T-cell (primary cell): ENCODE measurements at regions of chr7 and their contacts with region 1.

Region 1: GRCh38 chr7:105249216-105249615 is 139.5 kb downstream of the SRPK2 start:
- DNase-seq: no peak
- ATAC-seq: no peak
- H3K4me3 ChIP-seq: no peak overlapping the region
- H3K4me3 Mint-ChIP-seq: no peak overlapping the region
- H3K27ac ChIP-seq: no peak overlapping the region
- H3K27ac Mint-ChIP-seq: no peak overlapping the region
- H3K4me1 ChIP-seq: no peaks in the 10 kb centered on the region
- H3K4me1 Mint-ChIP-seq: peaks cover 40 to 47% (median 40%) of the 10 kb centered on the region in 3 donors
- H3K27me3 ChIP-seq: no peaks in the 10 kb centered on the region
- H3K27me3 Mint-ChIP-seq: no peaks in the 10 kb centered on the region

Region 2: GRCh38 chr7:105156731-105157130 is 92.5 kb before region 1 on chr7:
- CTCF ChIA-PET with region 1: no interaction called
- POLR2A ChIA-PET with region 1: no interaction called
- DNase-seq: no peak
- ATAC-seq: no peak
- H3K4me3 ChIP-seq: no peak overlapping the region
- H3K4me3 Mint-ChIP-seq: no peak overlapping the region
- H3K27ac ChIP-seq: no peak overlapping the region
- H3K27ac Mint-ChIP-seq: peak overlapping the region in 1 of 2 donors; percentile 5
- H3K4me1 ChIP-seq: no peaks in the 10 kb centered on the region
- H3K4me1 Mint-ChIP-seq: peaks cover 6 to 14% (median 9%) of the 10 kb centered on the region in 3 donors
- H3K27me3 ChIP-seq: no peaks in the 10 kb centered on the region
- H3K27me3 Mint-ChIP-seq: no peaks in the 10 kb centered on the region

Region 3: GRCh38 chr7:105228555-105228954 is 20.7 kb before region 1 on chr7:
- CTCF ChIA-PET with region 1: no interaction called
- POLR2A ChIA-PET with region 1: interaction called in 1 of 2 experiments, 12 read pairs
- DNase-seq: no peak
- ATAC-seq: no peak
- H3K4me3 ChIP-seq: no peak overlapping the region
- H3K4me3 Mint-ChIP-seq: no peak overlapping the region
- H3K27ac ChIP-seq: no peak overlapping the region
- H3K27ac Mint-ChIP-seq: no peak overlapping the region
- H3K4me1 ChIP-seq: peaks cover 0 to 3% of the 10 kb centered on the region in 2 experiments
- H3K4me1 Mint-ChIP-seq: peaks cover 15 to 27% (median 20%) of the 10 kb centered on the region in 3 donors
- H3K27me3 ChIP-seq: no peaks in the 10 kb centered on the region
- H3K27me3 Mint-ChIP-seq: no peaks in the 10 kb centered on the region